ENCODE measurements at regions of chr3 and their contacts with region 1.

Region 1: GRCh38 chr3:52197842-52198668 is at the start of gene ALAS1:
- DNase-seq: peak; percentile 82
- H3K4me3 ChIP-seq: peak within 1 kb of the TSS; percentile 79 to 88 (median 86)
- H3K27ac ChIP-seq: peak within 1 kb of the TSS; percentile 42
- H3K4me1 ChIP-seq: peaks cover 29% of the 10 kb centered on the region
- H3K27me3 ChIP-seq: no peaks in the 10 kb centered on the region
- CTCF ChIP-seq: no peak
- total RNA-seq, gene ALAS1: 24.2 to 39.2 TPM

Region 2: DNA sequence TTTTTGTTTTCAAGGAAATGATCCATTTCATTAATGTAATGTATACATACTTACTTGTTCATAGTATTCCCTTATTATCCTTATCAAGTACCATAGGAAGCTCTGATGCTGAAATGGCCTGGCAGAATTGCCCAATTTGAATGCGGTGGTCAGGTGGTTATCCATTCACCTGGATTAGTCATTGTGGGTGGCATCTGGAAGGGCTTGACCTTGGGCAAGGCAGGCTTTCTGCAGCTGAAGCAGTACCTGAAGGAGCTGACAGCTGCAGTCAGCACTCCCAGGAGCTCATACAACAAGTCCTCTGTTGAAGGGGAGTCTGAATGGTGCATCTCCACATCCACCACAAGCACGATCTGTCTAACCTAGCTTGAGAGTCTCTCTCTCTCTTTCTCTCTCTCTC is 310.4 kb before region 1 on chr3:
- CTCF ChIA-PET with region 1: no interaction called
- dilution Hi-C with region 1: no loop called
- in situ Hi-C with region 1: no loop called
- intact Hi-C with region 1: no loop called
- DNase-seq: peak; percentile 85
- H3K4me3 ChIP-seq: no peak overlapping the region
- H3K27ac ChIP-seq: no peak overlapping the region
- H3K4me1 ChIP-seq: peaks cover 11% of the 10 kb centered on the region
- H3K27me3 ChIP-seq: no peaks in the 10 kb centered on the region
- CTCF ChIP-seq: no peak

Region 3: GRCh38 chr3:52162250-52162872 is 35.7 kb before region 1 on chr3:
- CTCF ChIA-PET with region 1: no interaction called
- dilution Hi-C with region 1: no loop called
- in situ Hi-C with region 1: no loop called
- intact Hi-C with region 1: no loop called
- DNase-seq: no peak
- H3K4me3 ChIP-seq: no peak overlapping the region
- H3K27ac ChIP-seq: no peak overlapping the region
- H3K4me1 ChIP-seq: no peaks in the 10 kb centered on the region
- H3K27me3 ChIP-seq: no peaks in the 10 kb centered on the region
- CTCF ChIP-seq: no peak

Region 4: DNA sequence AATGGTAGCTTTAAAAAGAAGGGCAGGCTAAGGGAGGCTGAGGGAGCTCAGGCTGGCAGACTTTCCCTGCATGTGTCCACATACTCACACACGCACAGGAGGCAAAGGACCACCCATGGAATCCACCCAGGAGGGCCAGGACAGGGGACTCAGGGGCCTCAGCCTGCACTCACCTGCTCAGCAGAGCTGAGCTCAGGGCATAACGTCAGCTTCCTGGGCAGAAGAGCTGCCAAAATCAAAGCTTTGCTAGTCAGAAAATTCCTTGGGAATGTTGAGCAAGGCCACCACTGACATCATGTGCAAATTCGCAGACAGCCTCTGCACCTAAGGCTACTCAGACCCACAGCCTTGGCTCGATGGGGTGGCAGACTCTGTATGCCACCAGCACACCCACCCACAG is 16.5 kb before region 1 on chr3:
- CTCF ChIA-PET with region 1: interaction called, 3 read pairs
- dilution Hi-C with region 1: no loop called
- in situ Hi-C with region 1: no loop called
- intact Hi-C with region 1: loop called (anchors 2 kb)
- DNase-seq: peak; percentile 57
- H3K4me3 ChIP-seq: no peak overlapping the region
- H3K27ac ChIP-seq: no peak overlapping the region
- H3K4me1 ChIP-seq: peaks cover 7% of the 10 kb centered on the region
- H3K27me3 ChIP-seq: no peaks in the 10 kb centered on the region
- CTCF ChIP-seq: no peak

Region 5: GRCh38 chr3:52596658-52597265 is 398.7 kb after region 1 on chr3:
- CTCF ChIA-PET with region 1: no interaction called
- dilution Hi-C with region 1: no loop called
- in situ Hi-C with region 1: no loop called
- intact Hi-C with region 1: no loop called
- DNase-seq: no peak
- H3K4me3 ChIP-seq: no peak overlapping the region
- H3K27ac ChIP-seq: no peak overlapping the region
- H3K4me1 ChIP-seq: no peaks in the 10 kb centered on the region
- H3K27me3 ChIP-seq: no peaks in the 10 kb centered on the region
- CTCF ChIP-seq: no peak

Region 6: DNA sequence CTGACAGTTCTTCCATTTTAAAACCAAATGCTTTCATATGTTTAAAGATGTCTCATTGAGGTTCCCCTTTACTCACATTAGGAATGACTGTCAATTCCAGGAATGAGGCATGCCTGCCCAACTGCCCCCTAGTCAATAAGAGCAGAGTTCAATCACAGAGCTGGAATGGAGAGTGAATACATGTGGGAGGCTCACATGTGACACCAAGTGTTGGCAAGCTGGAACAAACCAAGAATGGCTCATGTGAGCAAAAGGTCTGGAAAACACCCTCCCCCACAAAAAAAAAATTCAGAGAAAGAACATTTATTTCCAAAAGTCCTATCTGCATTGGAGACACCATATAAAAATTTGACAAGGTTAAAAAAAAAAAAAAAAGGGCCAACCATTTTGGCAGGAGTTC is 484.0 kb after region 1 on chr3:
- CTCF ChIA-PET with region 1: no interaction called
- dilution Hi-C with region 1: no loop called
- in situ Hi-C with region 1: no loop called
- intact Hi-C with region 1: no loop called
- DNase-seq: peak; percentile 69
- H3K4me3 ChIP-seq: no peak overlapping the region
- H3K27ac ChIP-seq: peak overlapping the region; percentile 6
- H3K4me1 ChIP-seq: peaks cover 14% of the 10 kb centered on the region
- H3K27me3 ChIP-seq: no peaks in the 10 kb centered on the region
- CTCF ChIP-seq: peak; percentile 11 to 46

Measured in mammary epithelial cell (primary cell).